Activated T-helper 2 cell treated with anti-CD3 and anti-CD28 coated beads, Interferon-gamma antibody, Interleukin-2, Interleukin-4, amounts not matched to agents 10 μg/mL and 5 μg/mL and 100 μg/mL, durations not matched to agents 14 hours and 24 hours and 36 hours (primary cell): ENCODE measurements at regions of chr1 and their contacts with region 1.

Region 1: DNA sequence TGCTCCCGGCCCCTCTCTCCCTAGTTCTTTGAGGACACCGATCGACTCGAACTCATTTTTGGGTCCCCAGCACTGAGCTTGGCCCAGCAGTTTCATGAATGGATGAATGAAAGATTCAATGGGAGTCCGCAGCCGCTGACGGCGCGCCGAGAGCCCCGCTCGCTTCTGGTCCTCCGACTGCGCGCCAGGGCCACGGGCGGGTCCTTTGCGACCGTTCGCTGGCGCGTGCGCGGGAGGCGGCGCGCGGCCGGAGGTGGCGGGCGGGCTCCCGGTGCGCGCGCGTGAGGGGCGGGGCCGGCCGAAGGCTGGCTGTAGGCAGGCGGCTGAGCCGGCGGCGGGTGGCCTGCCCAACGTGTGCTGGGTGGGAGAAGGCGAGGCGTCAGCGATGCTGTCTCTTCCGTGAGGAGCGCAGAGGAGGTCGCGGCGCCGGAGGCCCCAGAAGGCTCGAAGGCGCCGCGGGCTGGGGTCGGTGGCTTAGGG is at the start of gene MAST2:
- DNase-seq: peak; percentile 83
- H3K4me3 Mint-ChIP-seq: peak within 1 kb of the TSS; percentile 95
- H3K27ac Mint-ChIP-seq: peak within 1 kb of the TSS; percentile 95
- H3K4me1 Mint-ChIP-seq: peaks cover 29% of the 10 kb centered on the region
- H3K27me3 Mint-ChIP-seq: no peaks in the 10 kb centered on the region
- total RNA-seq, gene MAST2: 33.4 and 38.6 TPM in 2 replicates

Region 2: DNA sequence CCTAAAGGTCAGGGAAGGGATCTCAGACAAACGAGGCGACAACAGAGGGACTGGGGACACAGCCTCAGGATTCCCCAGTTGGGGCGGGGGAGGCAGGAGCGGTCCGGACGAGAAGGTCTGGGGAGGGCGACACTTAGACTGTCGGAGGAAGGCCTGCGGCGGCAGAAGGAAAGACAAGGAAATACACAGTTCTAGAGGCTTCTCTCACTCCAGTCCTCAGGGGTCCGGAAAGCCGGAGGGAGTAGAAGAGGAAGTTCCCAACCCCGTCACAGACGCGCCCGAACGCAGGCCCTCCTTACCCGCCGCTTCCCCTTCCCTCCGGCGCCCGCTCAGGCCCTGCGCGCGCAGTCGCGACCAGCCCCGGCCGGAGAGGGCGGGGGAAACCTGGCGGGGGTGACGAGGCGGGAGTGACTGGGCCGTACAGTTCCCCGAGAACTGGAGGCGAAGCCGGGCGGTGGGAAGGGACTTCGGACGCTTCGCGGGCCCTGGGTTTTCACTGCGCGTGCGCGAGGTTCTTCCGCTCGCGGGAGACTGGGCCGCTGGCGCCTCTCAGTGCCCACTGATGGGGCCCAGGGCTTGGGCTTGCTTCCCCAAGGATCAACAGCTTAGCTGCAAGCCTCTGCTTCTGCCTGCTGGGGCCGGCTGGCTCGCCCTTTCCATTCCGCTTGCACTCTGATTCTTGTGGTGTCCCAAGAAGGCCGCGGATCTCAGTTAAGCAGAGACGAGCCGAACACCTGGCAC is 52.9 kb before region 1 on chr1 and contains the start of gene IPP:
- intact Hi-C with region 1: loop called (anchors 2 kb)
- DNase-seq: peak; percentile 95
- H3K4me3 Mint-ChIP-seq: peak within 1 kb of the TSS; percentile 96
- H3K27ac Mint-ChIP-seq: peak within 1 kb of the TSS; percentile 98
- H3K4me1 Mint-ChIP-seq: peaks cover 14% of the 10 kb centered on the region
- H3K27me3 Mint-ChIP-seq: no peaks in the 10 kb centered on the region
- total RNA-seq, gene IPP: 14.7 and 15.6 TPM in 2 replicates

Region 3: DNA sequence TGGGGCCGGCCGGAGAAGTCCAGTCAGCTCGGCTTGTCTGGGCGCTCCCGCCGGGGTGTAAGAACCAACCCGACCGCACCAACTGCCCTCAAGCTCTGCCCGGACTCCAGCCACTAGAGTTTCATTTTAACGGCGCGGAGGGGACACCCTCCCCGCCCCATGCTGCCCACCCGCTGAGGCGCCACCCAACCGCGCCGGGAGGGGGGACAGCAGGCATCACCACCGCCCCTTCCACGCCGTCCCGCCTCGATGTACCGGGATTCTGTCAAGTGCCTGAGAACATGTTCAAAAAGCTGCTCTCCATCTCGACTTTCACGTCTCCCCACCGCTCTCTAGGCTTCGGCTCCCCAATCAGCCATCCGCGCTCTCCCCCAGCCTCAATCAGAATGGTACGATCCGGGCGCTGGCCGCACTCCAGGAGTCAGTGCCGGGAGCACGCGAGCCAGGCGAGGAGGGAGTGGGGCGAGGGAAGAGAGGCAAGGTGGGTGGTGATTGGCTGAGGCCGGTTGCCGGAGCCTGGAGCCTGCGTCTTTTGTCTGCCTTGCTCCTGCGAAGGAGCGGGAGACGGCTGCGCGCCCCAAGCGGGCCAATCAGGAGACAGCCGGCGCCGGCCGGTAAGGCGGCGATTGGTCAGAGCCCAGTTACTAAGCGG is 329.3 kb after region 1 on chr1 and contains the start of gene PIK3R3:
- intact Hi-C with region 1: loop called (anchors 5 kb)
- DNase-seq: peak; percentile 91
- H3K4me3 Mint-ChIP-seq: peak within 1 kb of the TSS; percentile 94
- H3K27ac Mint-ChIP-seq: peak within 1 kb of the TSS; percentile 96
- H3K4me1 Mint-ChIP-seq: peaks cover 24% of the 10 kb centered on the region
- H3K27me3 Mint-ChIP-seq: peaks cover 62% of the 10 kb centered on the region
- total RNA-seq, gene PIK3R3: 2.8 and 3.3 TPM in 2 replicates